ENCODE measurements at regions of chr11 and their contacts with region 1.

Region 1: DNA sequence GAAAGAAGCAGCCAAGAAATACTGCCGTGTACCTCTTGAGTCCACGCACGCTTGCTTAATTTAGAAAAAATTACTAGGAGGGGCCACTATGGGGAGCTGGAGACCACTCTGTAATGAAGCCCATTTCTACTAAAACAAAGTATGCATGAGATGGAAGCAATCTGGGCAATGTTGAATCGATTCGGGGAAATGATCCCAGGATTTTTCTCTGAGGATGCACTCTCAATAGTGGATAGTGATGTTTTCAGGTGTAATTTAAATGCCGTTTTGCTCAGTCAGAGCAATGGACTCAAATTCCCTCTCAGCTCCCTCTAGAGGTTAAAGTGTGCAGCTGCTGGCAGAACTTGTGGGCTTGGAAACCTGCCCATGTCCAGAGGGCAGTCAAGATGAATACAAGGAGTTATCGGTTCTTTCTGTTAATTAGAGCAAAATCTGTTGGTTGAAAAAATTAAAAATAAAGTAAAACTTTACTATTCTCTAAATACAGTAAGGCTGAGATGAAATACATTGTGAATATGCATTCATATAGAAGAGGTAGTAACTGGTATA is 64.1 kb downstream of the ME3 start:
- DNase-seq: peak; percentile 66

Region 2: DNA sequence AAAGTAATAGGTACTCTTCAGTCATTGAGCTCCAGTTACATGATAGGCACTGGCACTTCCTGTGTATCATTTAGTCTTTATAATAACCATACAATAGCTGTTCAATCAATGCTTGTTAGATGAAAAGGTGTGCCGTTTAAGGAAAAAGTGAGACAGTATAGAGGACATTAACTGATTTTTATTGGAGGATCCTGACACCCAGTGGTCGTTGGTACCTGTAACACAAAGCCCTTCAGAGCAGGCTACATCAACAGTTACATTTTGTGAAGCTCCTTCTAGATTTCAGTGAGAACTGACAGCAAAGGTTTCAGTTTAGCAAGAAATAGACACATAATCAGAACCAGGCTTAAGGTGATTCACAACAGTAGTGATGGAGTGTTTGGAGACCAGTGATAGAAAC is 189.4 kb before region 1 on chr11:
- CTCF ChIA-PET with region 1: no interaction called
- POLR2A ChIA-PET with region 1: no interaction called
- DNase-seq: no peak

Region 3: DNA sequence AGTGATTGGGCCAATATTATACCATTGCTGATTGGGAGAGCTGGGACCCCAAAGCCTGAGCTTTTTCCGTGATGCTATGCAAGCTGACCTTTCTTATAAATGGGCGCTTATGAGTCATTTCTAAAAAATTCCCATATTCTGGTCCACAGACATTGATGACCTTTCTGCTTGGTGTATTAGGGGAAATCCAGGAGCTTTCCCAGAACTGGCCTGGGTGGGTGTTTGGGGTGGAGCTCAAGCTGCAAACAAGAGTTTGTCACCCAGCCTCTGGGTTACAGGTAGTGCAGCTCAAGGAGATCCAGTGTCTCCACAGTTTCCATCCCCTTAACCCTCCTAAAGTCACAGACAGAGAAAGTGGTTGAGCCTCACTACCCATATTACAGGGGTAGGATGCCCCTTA is 165.9 kb before region 1 on chr11:
- CTCF ChIA-PET with region 1: no interaction called
- POLR2A ChIA-PET with region 1: no interaction called
- DNase-seq: no peak

Region 4: DNA sequence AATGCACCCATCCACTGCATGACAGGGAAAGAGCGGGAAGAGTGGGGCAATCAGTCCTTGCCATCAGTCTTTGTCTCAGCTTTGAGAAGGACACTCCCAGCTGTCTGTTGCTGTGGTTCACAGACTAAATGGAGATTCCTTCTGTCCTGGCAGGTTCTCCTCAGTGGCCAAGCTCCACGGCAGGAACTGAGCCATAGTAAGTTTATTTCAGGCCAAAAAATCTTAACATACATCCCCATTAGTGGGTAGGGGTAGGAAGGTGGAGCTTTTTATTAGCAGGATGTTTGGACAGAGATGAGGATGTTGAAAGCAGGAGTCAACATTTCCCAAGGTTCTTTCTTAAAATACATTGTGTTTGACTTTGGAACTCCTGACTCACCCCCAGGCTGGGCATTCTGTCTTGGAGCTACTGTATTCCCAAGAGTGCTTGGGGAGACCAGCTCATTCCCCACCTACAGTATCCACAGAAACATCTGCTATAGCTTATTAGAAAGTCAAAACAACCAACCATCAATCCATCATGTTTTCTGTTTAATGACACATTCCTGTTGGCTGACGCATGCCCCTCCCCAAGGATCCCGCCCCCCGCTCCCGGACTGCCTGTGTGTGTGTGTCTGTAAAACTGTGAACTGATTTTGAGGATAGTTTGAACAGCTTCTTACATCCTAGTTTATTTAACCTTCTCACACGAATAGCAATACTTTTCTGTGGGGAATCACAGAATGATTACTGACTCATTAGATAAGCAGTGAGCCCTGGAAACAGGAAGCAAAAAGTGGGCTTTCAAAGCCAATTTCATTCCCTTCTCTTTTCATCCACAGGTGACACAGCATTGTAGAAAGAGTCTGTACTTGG is 124.2 kb before region 1 on chr11:
- CTCF ChIA-PET with region 1: interaction called, 12 read pairs
- POLR2A ChIA-PET with region 1: no interaction called
- DNase-seq: peak; percentile 23

Region 5: GRCh38 chr11:86577663-86578636 is 30.4 kb before region 1 on chr11:
- CTCF ChIA-PET with region 1: interaction called, 17 read pairs
- POLR2A ChIA-PET with region 1: no interaction called
- DNase-seq: no peak

Region 6: GRCh38 chr11:86592659-86593451 is 15.5 kb before region 1 on chr11:
- CTCF ChIA-PET with region 1: interaction called, 14 read pairs
- POLR2A ChIA-PET with region 1: no interaction called
- DNase-seq: peak; percentile 31

Region 7: DNA sequence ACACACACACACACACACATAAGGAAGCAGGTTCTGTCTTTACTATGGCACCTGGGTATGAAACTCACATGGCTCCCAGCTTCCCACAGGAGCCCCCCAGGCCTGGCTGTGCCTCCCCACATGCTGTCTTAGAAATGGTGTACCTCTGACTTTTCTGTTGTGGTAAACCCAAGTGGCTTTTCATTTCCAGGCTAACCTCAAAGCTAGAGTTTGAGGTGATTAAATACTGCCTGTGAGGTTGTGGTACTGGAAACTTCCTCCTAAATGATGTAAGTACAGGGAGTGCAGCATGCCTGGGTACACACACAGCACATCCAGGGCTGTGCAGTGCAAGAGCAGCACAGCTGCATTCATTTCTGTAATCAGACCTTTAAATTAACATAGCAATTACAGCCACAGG is 29.7 kb after region 1 on chr11:
- CTCF ChIA-PET with region 1: interaction called, 13 read pairs
- POLR2A ChIA-PET with region 1: no interaction called
- DNase-seq: no peak

Region 8: GRCh38 chr11:86735462-86736302 is 127.4 kb after region 1 on chr11:
- CTCF ChIA-PET with region 1: no interaction called
- POLR2A ChIA-PET with region 1: no interaction called
- DNase-seq: no peak

Region 9: GRCh38 chr11:86848861-86849260 is 240.5 kb after region 1 on chr11:
- CTCF ChIA-PET with region 1: no interaction called
- POLR2A ChIA-PET with region 1: no interaction called
- DNase-seq: no peak